ENCODE measurements at regions of chr20 and their contacts with region 1.

Region 1: DNA sequence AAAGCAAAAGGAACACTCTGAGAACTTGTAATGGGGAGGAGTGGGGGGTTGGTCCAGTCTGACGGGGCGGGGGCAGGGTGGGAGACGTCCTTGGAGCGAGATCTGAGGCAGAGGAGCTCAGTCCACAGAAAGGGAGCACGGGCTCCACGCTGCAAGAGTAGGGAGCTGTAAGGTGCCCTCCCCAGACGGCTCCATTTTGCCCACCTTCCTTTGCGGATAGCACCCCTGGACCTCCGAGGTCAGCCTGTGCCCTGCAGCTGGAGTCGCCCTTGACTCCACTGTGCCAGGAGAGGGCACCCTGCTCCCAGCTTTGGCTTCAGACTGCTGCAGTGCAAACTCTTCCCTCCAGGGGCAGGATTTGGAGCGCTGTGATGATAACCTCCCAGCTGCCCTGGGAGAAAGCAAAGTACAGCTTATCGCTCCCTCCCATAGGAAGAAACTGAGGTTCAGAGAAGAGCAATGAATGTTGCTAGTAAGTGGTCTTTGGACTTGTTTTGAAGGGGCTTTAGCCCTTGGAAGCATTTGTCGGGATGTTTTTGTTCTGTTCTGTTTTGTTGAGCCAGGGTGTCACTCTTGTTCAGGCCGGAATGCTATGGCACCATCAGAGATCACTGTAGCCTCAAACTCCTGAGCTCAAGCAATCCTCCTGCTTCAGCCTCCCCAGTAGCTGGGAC is 9.5 kb upstream of the AHCY start:
- DNase-seq: no peak
- H3K4me3 ChIP-seq: peak overlapping the region; percentile 51
- CTCF ChIP-seq: peak; percentile 100

Region 2: GRCh38 chr20:34190679-34191090 is 122.0 kb before region 1 on chr20:
- CTCF ChIA-PET with region 1: interaction called, 96 read pairs
- POLR2A ChIA-PET with region 1: no interaction called
- DNase-seq: peak; percentile 57
- H3K4me3 ChIP-seq: no peak overlapping the region
- CTCF ChIP-seq: peak; percentile 96

Region 3: GRCh38 chr20:34363062-34363464 is 50.4 kb after region 1 on chr20 and contains the start of gene ITCH:
- CTCF ChIA-PET with region 1: interaction called, 17 read pairs
- POLR2A ChIA-PET with region 1: interaction called, 8 read pairs
- DNase-seq: peak; percentile 83
- H3K4me3 ChIP-seq: peak within 1 kb of the TSS; percentile 79
- CTCF ChIP-seq: no peak

Region 4: GRCh38 chr20:34427331-34427730 is 114.7 kb after region 1 on chr20:
- CTCF ChIA-PET with region 1: interaction called, 15 read pairs
- POLR2A ChIA-PET with region 1: no interaction called
- DNase-seq: no peak
- H3K4me3 ChIP-seq: no peak overlapping the region
- CTCF ChIP-seq: no peak

Region 5: GRCh38 chr20:34459209-34459897 is 146.7 kb after region 1 on chr20:
- CTCF ChIA-PET with region 1: interaction called, 29 read pairs
- POLR2A ChIA-PET with region 1: no interaction called
- DNase-seq: no peak
- H3K4me3 ChIP-seq: no peak overlapping the region
- CTCF ChIP-seq: no peak

Region 6: GRCh38 chr20:34516247-34517113 is 203.8 kb after region 1 on chr20 and contains the start of gene DYNLRB1:
- CTCF ChIA-PET with region 1: interaction called, 99 read pairs
- POLR2A ChIA-PET with region 1: no interaction called
- DNase-seq: peak; percentile 82
- H3K4me3 ChIP-seq: peak within 1 kb of the TSS; percentile 88
- CTCF ChIP-seq: no peak

Region 7: DNA sequence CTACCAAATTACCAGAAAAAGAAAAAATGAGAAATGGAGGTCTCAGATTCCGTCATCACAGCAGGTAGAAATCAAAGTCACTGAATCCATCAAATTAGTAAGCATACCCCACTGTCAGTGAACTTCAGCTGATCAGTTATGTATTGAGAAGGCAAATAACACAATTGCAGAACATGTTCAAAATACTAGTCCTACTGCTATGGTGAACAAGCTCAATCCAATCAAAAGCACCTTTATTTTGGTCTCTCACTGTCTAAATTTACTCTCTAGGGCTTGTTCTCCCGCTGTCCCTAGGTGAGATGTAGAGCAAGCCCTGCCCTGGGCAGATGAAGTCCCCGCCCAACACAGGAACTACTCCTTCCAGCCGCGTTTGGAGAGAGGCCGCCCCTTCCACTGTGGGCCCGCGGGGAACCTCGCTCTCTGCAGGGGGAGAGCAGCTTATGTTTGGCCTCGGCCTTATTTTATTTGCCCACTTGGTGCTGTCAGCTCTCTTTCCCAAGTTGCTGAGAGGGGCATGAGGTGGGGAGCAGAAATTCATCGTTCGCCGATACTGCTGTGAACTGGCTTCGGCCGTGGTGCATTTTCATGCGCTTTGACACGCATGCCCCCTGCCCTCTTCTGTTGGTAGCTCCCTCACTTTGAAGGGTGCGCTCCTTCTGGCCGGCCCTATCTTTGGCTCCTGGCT is 231.6 kb after region 1 on chr20:
- CTCF ChIA-PET with region 1: interaction called, 32 read pairs
- POLR2A ChIA-PET with region 1: no interaction called
- DNase-seq: no peak
- H3K4me3 ChIP-seq: no peak overlapping the region
- CTCF ChIP-seq: no peak

Region 8: GRCh38 chr20:34724172-34724571 is 411.5 kb after region 1 on chr20:
- CTCF ChIA-PET with region 1: no interaction called
- POLR2A ChIA-PET with region 1: no interaction called
- DNase-seq: no peak
- H3K4me3 ChIP-seq: no peak overlapping the region
- CTCF ChIP-seq: no peak

Measured in AG04449 (cell line).